Sigmoid colon (tissue), 7 donors: ENCODE measurements at regions of chr6 and their contacts with region 1.

Region 1: DNA sequence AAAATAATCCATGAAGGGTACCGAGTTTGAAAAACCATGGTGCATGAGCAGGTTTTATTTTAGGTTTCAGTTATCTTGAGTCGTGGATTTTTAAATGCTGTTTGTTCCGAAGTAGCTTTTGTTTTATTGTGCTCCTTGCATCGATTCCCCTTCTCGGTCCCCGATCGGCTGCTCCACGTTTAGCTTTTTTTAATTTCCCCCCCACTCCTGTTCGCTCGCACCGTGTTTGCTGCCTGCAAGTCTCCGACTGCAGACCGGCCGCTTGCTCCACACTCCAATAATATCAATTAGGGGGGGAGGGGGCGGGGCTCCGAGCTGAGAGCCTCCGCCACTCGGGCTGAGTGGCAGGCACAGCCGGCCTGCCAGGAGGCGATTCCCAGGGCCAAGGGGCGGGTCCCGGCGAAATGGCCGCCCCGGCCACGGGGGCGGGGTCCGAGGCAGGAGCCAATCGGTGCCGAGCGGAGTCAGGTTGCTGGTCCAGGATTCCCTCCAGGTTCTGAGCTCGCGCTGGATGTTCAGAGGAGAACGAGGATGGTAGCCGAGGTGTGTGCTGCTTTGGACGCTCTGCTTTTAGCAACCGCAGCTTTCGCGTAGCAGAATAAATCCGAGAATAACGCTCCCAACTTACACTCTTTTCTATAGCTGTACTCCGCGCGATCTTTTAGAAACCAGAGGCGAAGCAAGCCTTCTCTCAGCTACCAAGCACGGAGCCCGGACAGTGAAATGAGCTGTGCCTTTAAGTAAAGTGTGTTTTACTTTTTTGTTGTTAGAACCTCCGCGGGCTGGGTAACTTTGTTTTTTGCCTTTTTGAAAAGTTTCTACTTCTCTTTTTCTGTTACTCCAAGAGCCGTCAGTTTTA is at the start of gene EPHA7:
- DNase-seq: peak; percentile 97
- H3K4me3 ChIP-seq: peak within 1 kb of the TSS; percentile 55 to 84 (median 68)
- H3K27ac ChIP-seq: peak within 1 kb of the TSS; percentile 80 to 89 (median 82)
- H3K4me1 ChIP-seq: peaks cover 0 to 30% (median 13%) of the 10 kb centered on the region in 4 donors
- H3K27me3 ChIP-seq: peaks cover 3 to 22% (median 8%) of the 10 kb centered on the region in 3 donors
- CTCF ChIP-seq: no peak
- EP300 ChIP-seq: no peak
- POLR2A ChIP-seq: peak; percentile 62 to 68
- total RNA-seq, gene EPHA7: 46.5 to 134 (median 108) TPM

Region 2: DNA sequence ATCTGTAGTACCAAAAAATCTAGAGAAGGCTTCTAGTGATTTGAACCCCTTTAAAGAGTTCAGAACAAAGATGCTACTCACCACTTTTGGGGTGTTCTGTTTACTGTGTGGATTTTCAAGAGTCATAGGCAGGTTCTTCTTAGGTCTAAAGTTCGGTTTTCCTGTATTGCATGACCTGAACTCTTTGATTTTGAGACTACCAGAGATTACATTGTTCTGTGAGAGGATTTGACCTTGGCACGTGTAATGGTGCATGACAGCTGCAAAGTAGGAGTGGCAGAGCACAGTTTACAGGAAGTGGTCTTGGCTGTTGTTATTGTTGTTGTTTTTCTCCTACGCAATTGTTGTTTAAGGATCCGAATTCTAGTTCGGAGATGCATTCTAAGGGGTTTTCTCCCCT is 592.9 kb before region 1 on chr6:
- intact Hi-C with region 1: no loop called
- DNase-seq: no peak
- H3K4me3 ChIP-seq: no peak overlapping the region
- H3K27ac ChIP-seq: no peak overlapping the region
- H3K4me1 ChIP-seq: no peaks in the 10 kb centered on the region
- H3K27me3 ChIP-seq: no peaks in the 10 kb centered on the region
- CTCF ChIP-seq: no peak
- EP300 ChIP-seq: no peak
- POLR2A ChIP-seq: no peak

Region 3: GRCh38 chr6:93272211-93272610 is 147.3 kb before region 1 on chr6:
- intact Hi-C with region 1: loop called (anchors 10 kb)
- DNase-seq: no peak
- H3K4me3 ChIP-seq: no peak overlapping the region
- H3K27ac ChIP-seq: no peak overlapping the region
- H3K4me1 ChIP-seq: peaks cover 0 to 8% (median 0%) of the 10 kb centered on the region in 4 donors
- H3K27me3 ChIP-seq: no peaks in the 10 kb centered on the region
- CTCF ChIP-seq: no peak
- EP300 ChIP-seq: no peak
- POLR2A ChIP-seq: no peak

Region 4: GRCh38 chr6:93341900-93342613 is 77.5 kb before region 1 on chr6:
- intact Hi-C with region 1: no loop called
- DNase-seq: no peak
- H3K4me3 ChIP-seq: no peak overlapping the region
- H3K27ac ChIP-seq: no peak overlapping the region
- H3K4me1 ChIP-seq: peaks cover 0 to 9% (median 0%) of the 10 kb centered on the region in 4 donors
- H3K27me3 ChIP-seq: no peaks in the 10 kb centered on the region
- CTCF ChIP-seq: no peak
- EP300 ChIP-seq: no peak
- POLR2A ChIP-seq: no peak

Region 5: DNA sequence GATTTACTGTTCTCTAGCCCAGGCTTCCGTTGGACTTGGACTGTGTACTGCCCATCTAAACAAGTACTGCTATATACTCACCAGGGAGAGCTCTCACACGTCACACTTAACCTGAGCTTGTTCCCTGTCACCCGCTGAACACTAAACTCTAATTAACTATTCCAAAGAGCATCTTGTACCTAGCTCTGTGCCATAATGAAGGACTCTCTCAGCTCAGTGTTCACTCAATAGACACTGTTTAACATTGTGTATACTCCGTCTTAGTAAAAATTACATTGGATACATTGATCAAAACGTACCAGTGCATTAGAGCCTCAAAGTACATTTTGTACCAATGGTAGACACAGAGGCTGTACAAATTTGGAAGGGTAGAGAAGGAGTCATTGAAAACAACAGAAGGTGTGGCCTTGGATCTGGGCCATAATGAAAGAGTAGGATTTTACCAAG is 55.2 kb after region 1 on chr6:
- intact Hi-C with region 1: loop called (anchors 5 kb)
- DNase-seq: peak; percentile 84
- H3K4me3 ChIP-seq: no peak overlapping the region
- H3K27ac ChIP-seq: peak overlapping the region; percentile 52 to 80 (median 72)
- H3K4me1 ChIP-seq: peaks cover 0 to 20% (median 0%) of the 10 kb centered on the region in 4 donors
- H3K27me3 ChIP-seq: no peaks in the 10 kb centered on the region
- CTCF ChIP-seq: no peak
- EP300 ChIP-seq: peak; percentile 25 to 92 (median 52)
- POLR2A ChIP-seq: no peak

Region 6: DNA sequence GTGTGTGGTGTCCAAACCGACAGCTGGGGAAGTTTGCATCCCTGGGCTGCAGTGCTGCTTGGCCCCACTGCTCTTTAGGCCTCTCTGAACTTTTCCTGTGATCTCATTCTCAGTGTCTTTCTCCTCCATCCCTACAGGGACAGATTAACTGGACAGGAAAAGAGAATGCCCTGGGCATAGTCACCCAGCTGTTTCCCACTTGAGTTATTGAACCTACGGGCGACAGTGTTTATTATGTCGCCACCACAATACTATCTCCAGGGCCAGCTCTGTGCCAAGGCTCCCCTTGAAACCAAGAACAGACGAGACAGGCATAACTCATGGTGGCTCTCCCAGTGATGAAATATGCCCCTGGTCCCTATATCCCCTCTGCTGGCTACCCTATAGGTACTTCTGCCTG is 147.6 kb after region 1 on chr6:
- intact Hi-C with region 1: loop called (anchors 5 kb)
- DNase-seq: no peak
- H3K4me3 ChIP-seq: no peak overlapping the region
- H3K27ac ChIP-seq: peak overlapping the region; percentile 78 to 86 (median 82)
- H3K4me1 ChIP-seq: peaks cover 0 to 67% (median 40%) of the 10 kb centered on the region in 4 donors
- H3K27me3 ChIP-seq: no peaks in the 10 kb centered on the region
- CTCF ChIP-seq: no peak
- EP300 ChIP-seq: no peak
- POLR2A ChIP-seq: no peak

Region 7: DNA sequence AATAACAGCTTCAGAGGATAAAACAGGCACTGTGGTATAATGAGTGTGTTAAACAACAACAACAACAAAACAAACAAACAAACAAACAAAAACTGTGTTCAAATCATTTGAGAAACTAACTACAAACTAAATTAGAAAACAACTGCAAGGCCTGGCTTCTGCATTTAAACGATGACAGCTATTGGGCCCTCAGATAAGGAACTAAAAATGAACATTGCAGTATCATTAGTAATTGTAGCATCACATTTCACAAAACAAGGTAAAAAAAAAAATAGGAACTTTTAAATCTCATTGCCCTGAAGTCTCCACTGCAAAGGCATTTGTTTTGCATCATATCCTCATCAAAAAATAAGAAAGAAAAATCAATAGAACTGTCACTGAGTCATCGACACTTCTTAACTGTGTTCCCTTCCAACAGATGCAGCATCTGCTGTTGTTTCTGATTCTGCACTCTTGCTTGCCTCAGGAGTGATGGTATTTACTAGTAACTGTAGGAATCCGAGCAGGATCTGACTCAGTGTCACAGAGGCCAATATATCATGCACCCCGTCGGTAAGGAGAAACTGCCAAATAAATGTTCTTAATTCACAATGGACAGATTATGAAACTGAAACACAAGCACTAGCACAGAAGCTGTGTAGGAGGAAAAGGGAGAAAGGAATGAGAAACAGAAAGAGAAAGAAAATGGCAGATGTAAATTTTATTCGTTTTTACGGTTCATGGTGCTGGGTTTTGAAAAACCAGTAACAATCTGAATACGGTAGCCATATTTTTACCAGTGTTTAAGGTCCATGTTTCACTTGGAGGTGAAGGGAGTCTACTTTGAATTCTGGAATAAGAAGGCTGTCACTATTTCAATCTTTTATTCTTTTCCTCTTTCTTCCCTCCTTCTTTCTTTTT is 365.5 kb after region 1 on chr6:
- intact Hi-C with region 1: loop called (anchors 5 kb)
- DNase-seq: no peak
- H3K4me3 ChIP-seq: peak overlapping the region; percentile 6 to 42 (median 38)
- H3K27ac ChIP-seq: peak overlapping the region in 3 of 4 donors; percentile 65 to 76 (median 68)
- H3K4me1 ChIP-seq: peaks cover 0 to 23% (median 9%) of the 10 kb centered on the region in 4 donors
- H3K27me3 ChIP-seq: no peaks in the 10 kb centered on the region
- CTCF ChIP-seq: no peak
- EP300 ChIP-seq: no peak
- POLR2A ChIP-seq: no peak